ENCODE measurements at regions of chr18 and their contacts with region 1.

Region 1: GRCh38 chr18:23131693-23132319 is 3.5 kb upstream of the CABLES1 start:
- DNase-seq: peak; percentile 81
- H3K4me3 ChIP-seq: no peak overlapping the region
- H3K27ac ChIP-seq: no peak overlapping the region
- H3K4me1 ChIP-seq: peaks cover 25% of the 10 kb centered on the region
- H3K27me3 ChIP-seq: no peaks in the 10 kb centered on the region
- CTCF ChIP-seq: peak; percentile 62 to 71
- POLR2A ChIP-seq: no peak

Region 2: DNA sequence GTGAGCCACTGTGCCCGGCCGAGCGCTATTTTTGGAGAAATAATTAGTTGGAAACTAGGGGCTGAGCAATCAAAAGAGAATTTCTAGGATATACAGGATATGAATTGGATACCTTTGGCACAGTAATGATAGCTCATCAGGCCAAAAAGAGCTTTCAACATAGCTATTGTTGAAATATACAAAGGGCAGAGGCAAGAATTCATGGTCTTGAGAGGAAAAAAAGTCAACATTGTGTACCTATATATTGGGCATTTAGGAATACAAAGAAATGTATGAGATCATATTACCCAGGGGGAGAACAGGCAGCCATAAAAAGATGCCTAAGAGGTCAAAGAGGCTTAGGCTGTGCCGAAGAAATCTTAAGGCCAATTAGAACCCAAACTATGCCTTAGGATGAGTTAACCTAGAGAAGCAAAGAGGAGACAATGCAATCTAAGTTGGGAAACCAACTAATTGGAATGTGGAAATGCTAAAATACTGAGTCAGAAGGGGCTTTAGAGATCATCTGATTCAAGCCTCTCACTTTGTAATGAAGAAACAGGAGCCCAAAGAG is 99.7 kb before region 1 on chr18:
- CTCF ChIA-PET with region 1: interaction called, 21 read pairs
- POLR2A ChIA-PET with region 1: no interaction called
- dilution Hi-C with region 1: no loop called
- intact Hi-C with region 1: loop called (anchors 1 kb)
- DNase-seq: peak; percentile 45
- H3K4me3 ChIP-seq: no peak overlapping the region
- H3K27ac ChIP-seq: peak overlapping the region; percentile 20
- H3K4me1 ChIP-seq: peaks cover 10% of the 10 kb centered on the region
- H3K27me3 ChIP-seq: no peaks in the 10 kb centered on the region
- CTCF ChIP-seq: no peak
- POLR2A ChIP-seq: no peak

Region 3: DNA sequence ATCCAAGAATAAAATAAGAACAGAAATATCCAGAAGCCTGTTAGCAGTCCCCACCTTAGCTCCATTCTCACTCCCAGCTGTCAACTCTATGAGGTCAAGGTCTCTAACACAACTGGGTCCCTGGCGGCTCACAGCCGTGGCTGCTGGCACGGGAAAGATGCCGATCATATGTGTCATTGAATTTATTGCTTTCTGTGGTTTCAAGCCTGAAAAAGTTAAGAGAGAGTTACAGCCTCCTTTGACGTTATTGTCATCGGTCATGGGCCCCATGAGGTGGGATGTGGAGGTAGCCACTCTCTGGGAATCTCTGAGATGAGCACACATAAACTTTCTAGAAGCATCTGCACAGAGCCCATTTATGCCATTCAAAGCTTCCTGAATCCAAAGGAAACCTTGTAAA is 25.2 kb before region 1 on chr18:
- CTCF ChIA-PET with region 1: interaction called, 16 read pairs
- POLR2A ChIA-PET with region 1: no interaction called
- dilution Hi-C with region 1: no loop called
- intact Hi-C with region 1: no loop called
- DNase-seq: peak; percentile 77
- H3K4me3 ChIP-seq: peak overlapping the region in 1 of 3 experiments; percentile 16
- H3K27ac ChIP-seq: peak overlapping the region; percentile 93
- H3K4me1 ChIP-seq: peaks cover 27% of the 10 kb centered on the region
- H3K27me3 ChIP-seq: no peaks in the 10 kb centered on the region
- CTCF ChIP-seq: no peak
- POLR2A ChIP-seq: no peak

Region 4: DNA sequence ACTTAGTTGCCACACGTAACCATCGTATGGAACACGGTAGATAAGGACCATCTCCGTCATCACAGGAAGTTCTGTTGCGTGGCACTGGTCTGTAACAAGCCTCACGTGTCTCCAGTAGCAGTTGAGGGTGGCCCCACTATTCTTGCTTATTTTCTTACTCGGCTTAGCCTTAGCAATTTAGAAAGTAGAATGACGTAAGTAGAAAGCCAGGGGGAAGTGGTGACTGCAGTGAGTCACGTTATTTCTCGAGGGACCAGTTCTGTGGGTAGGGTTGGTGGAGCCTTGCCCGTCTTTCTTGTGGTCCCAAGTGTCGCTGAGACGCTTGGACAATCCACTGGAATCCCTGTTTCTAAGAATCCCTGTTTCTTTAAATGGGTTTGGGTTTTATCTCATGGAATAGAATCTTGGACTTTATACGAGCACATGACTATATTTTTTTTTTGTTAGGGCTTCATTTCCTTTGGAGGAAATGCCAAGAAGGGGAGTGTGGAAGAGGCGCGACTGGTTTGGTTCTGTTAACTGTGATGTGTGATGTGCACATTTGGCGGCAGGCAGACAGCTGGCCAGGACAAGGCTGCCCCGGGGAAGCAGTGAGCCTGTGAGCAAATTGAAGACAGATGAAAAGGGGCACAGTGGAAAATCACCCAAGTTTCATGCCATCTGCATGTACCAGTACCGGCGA is 99.7 kb after region 1 on chr18:
- CTCF ChIA-PET with region 1: interaction called, 12 read pairs
- POLR2A ChIA-PET with region 1: no interaction called
- dilution Hi-C with region 1: no loop called
- intact Hi-C with region 1: loop called (anchors 1 kb)
- DNase-seq: peak; percentile 97
- H3K4me3 ChIP-seq: no peak overlapping the region
- H3K27ac ChIP-seq: peak overlapping the region; percentile 90
- H3K4me1 ChIP-seq: peaks cover 50% of the 10 kb centered on the region
- H3K27me3 ChIP-seq: no peaks in the 10 kb centered on the region
- CTCF ChIP-seq: no peak
- POLR2A ChIP-seq: peak; percentile 27

Region 5: GRCh38 chr18:23311351-23312121 is 179.7 kb after region 1 on chr18:
- CTCF ChIA-PET with region 1: interaction called, 3 read pairs
- POLR2A ChIA-PET with region 1: no interaction called
- dilution Hi-C with region 1: no loop called
- intact Hi-C with region 1: loop called (anchors 10 kb)
- DNase-seq: peak; percentile 97
- H3K4me3 ChIP-seq: no peak overlapping the region
- H3K27ac ChIP-seq: peak overlapping the region; percentile 92
- H3K4me1 ChIP-seq: peaks cover 52% of the 10 kb centered on the region
- H3K27me3 ChIP-seq: no peaks in the 10 kb centered on the region
- CTCF ChIP-seq: no peak
- POLR2A ChIP-seq: peak; percentile 22

Region 6: GRCh38 chr18:23401400-23402347 is 269.9 kb after region 1 on chr18:
- CTCF ChIA-PET with region 1: interaction called, 13 read pairs
- POLR2A ChIA-PET with region 1: no interaction called
- dilution Hi-C with region 1: no loop called
- intact Hi-C with region 1: no loop called
- DNase-seq: peak; percentile 97
- H3K4me3 ChIP-seq: no peak overlapping the region
- H3K27ac ChIP-seq: peak overlapping the region; percentile 92
- H3K4me1 ChIP-seq: peaks cover 22% of the 10 kb centered on the region
- H3K27me3 ChIP-seq: no peaks in the 10 kb centered on the region
- CTCF ChIP-seq: no peak
- POLR2A ChIP-seq: peak; percentile 80